Right cardiac atrium (tissue), 5 donors: ENCODE measurements at regions of chr14 and their contacts with region 1.

Region 1: GRCh38 chr14:59126710-59127432 is 61.6 kb upstream of the DAAM1 start:
- DNase-seq: no peak
- ATAC-seq: peak; percentile 83 to 92
- H3K4me3 ChIP-seq: no peak overlapping the region
- H3K27ac ChIP-seq: no peak overlapping the region
- H3K4me1 ChIP-seq: no peaks in the 10 kb centered on the region
- H3K27me3 ChIP-seq: no peaks in the 10 kb centered on the region

Region 2: DNA sequence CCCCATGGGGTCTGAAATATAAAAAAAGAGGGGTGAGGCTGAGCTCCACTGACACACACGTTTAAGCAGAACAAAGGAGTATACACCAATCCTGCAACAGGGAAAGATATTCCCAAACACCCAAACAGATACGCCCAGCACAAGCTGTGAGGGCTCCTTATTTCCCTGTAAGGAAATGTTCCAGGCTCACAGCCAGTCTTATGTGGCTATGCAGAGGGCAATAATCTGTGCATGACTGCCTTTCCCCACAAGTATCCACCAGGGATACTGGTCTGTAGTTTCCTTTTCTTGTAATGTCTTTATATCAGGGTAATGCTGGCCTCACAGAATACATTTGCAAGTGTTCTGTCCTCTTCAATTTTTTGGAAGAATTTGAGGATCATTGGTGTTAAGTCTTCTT is 80.1 kb before region 1 on chr14:
- intact Hi-C with region 1: no loop called
- DNase-seq: no peak
- ATAC-seq: no peak
- H3K4me3 ChIP-seq: no peak overlapping the region
- H3K27ac ChIP-seq: no peak overlapping the region
- H3K4me1 ChIP-seq: no peaks in the 10 kb centered on the region
- H3K27me3 ChIP-seq: no peaks in the 10 kb centered on the region

Region 3: DNA sequence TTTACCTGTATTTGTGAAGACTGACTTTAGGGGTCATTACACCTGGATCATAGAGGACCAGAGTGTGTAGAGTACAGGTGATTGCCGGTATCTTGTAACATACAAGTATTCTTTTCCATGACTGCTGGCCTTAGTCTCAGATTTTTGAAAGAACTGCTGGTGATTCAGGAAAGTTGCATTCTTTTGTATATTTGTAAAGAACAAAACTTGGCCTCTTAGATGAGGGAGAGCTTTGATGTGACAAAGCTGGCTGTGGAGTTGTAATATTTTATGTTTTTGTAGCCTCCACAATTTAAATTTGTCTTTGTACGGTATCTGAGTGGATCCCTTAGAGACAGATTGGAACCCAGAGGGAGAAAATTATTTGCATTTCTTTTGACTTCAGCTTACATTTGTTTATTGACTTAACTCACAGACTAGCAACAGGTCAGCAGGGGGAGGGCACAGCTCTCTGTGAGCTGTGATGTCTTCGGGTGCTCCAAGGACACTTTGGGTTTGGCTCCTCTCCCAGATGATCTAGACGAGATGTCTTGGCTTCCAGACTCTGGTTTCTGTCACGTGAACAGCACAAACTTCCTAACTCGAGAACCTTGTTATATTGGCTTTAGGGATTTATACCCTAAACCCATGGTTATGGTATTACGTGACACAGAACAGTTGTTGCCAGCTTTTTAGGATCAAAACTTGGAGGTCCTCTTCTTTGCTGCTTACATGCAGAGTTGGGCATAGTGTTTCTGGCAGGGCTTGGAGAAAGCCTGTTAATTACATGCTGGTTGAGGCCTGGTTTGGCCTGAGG is 127.5 kb after region 1 on chr14:
- intact Hi-C with region 1: loop called in 1 of 4 experiments (anchors 5 kb)
- DNase-seq: peak; percentile 68 to 87 (median 78)
- ATAC-seq: peak; percentile 85 to 89
- H3K4me3 ChIP-seq: no peak overlapping the region
- H3K27ac ChIP-seq: peak overlapping the region; percentile 99
- H3K4me1 ChIP-seq: peaks cover 23% of the 10 kb centered on the region
- H3K27me3 ChIP-seq: no peaks in the 10 kb centered on the region

Region 4: DNA sequence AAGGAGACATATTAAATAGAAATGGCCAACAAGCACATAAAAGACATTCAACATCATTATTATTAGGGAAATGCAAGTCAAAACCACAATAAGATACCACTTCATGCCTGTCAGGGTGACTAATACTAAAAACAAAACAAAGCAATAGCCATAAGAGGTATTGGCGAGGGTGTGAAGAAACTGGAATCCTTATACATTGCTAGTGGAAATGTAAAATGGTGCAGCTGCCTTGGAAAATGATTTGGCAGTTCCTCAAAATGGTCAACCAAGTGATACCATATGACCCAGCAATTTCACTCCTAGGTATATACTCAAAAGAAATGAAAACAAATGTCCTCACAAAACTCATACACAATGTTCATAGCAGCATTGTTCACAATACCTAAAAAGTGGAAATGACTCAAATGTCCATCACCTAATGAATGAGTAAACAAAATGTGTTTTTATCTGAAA is 311.4 kb after region 1 on chr14:
- intact Hi-C with region 1: loop called in 1 of 4 experiments (anchors 5 kb)
- DNase-seq: no peak
- ATAC-seq: no peak
- H3K4me3 ChIP-seq: no peak overlapping the region
- H3K27ac ChIP-seq: no peak overlapping the region
- H3K4me1 ChIP-seq: peaks cover 5% of the 10 kb centered on the region
- H3K27me3 ChIP-seq: no peaks in the 10 kb centered on the region

Region 5: GRCh38 chr14:59454131-59454530 is 327.3 kb after region 1 on chr14:
- intact Hi-C with region 1: loop called in 1 of 4 experiments (anchors 5 kb)
- DNase-seq: peak in 1 of 3 donors; percentile 51
- ATAC-seq: peak; percentile 92 to 96
- H3K4me3 ChIP-seq: no peak overlapping the region
- H3K27ac ChIP-seq: no peak overlapping the region
- H3K4me1 ChIP-seq: no peaks in the 10 kb centered on the region
- H3K27me3 ChIP-seq: no peaks in the 10 kb centered on the region

Region 6: DNA sequence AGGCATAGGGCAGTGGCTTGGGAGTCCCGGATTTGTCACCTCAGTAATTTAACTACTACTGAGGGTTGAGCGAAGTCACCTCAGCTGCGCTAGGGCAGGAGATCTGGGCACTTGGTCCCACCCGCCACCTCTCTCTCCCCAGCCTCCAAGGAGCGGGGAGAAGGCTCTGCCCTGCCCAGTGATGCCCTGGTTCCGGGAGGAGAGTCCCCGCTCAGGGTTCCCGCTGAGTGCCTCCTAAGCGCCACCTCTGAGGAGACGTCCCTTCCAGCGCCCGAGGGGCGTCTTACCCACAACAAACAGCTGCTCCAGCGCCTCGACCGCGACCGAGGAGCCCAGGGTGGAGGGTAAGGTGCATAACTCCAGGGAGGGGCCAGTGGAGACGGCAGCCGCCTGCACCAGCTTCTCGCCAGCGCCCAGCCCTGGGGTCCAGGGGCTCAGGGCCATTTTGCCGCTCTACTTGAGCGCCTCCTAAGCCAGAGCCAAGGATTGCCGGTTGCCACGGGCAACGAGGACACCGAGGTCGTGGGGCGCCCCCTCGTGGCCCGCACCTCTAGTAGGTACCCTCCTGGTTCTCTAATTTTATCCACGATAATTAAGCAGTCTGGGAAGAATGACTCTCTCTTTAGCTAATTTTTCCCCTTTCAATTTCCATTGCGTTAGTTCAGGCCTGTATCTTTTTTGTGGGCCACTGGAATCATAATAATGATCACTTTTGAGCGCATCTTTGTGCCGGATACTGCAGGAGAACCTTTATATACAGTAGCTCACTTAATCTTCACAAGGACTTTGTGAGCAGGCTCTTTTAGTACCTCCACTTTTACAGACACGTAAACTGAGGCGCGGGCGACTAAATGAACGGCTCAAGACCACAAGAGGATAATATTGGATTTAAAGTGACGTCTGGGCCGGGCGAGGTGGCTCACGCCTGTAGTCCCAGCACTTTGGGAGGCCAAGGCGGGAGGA is 449.7 kb after region 1 on chr14 and contains the start of gene CCDC175:
- intact Hi-C with region 1: loop called in 1 of 4 experiments (anchors 10 kb)
- DNase-seq: peak; percentile 87 to 97 (median 93)
- ATAC-seq: peak; percentile 95
- H3K4me3 ChIP-seq: no peak within 1 kb of the TSS
- H3K27ac ChIP-seq: no peak within 1 kb of the TSS
- H3K4me1 ChIP-seq: no peaks in the 10 kb centered on the region
- H3K27me3 ChIP-seq: no peaks in the 10 kb centered on the region
- total RNA-seq, gene CCDC175: not detected